IMR-90 (cell line): ENCODE measurements at regions of chr9 and their contacts with region 1.

Region 1: GRCh38 chr9:76704593-76705204 is 59.5 kb upstream of the PCA3 start:
- DNase-seq: peak; percentile 93
- ATAC-seq: peak; percentile 82
- H3K4me3 ChIP-seq: no peak overlapping the region
- H3K27ac ChIP-seq: no peak overlapping the region
- H3K4me1 ChIP-seq: no peaks in the 10 kb centered on the region
- H3K27me3 ChIP-seq: peaks cover 31% of the 10 kb centered on the region
- CTCF ChIP-seq: peak; percentile 88
- POLR2A ChIP-seq: no peak
- RAD21 ChIP-seq: peak; percentile 95

Region 2: GRCh38 chr9:76321205-76321828 is 383.4 kb before region 1 on chr9:
- CTCF ChIA-PET with region 1: no interaction called
- POLR2A ChIA-PET with region 1: no interaction called
- dilution Hi-C with region 1: no loop called
- in situ Hi-C with region 1: no loop called
- intact Hi-C with region 1: loop called (anchors 5 kb)
- DNase-seq: peak; percentile 89
- ATAC-seq: peak; percentile 93
- H3K4me3 ChIP-seq: no peak overlapping the region
- H3K27ac ChIP-seq: peak overlapping the region; percentile 85
- H3K4me1 ChIP-seq: peaks cover 3% of the 10 kb centered on the region
- H3K27me3 ChIP-seq: no peaks in the 10 kb centered on the region
- CTCF ChIP-seq: no peak
- POLR2A ChIP-seq: no peak
- RAD21 ChIP-seq: no peak

Region 3: DNA sequence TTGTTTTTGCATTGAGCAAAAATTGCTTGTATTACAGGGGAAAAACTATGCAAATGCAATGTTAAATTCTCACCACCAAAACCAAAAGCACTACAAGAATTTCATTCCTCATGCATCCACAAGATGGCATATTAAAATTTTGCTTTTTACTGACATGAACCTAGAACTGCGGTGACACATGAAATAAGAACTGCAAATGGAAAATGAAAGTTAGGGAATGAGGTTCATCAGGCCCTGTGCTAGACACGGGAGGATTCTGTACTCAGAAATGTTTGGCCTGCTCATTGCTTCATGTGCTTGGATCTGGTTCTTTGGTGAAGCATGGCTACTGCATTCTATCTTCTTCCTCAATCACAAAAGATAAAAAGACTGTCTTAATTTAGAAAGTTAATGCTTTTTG is 301.3 kb before region 1 on chr9:
- CTCF ChIA-PET with region 1: no interaction called
- POLR2A ChIA-PET with region 1: no interaction called
- dilution Hi-C with region 1: no loop called
- in situ Hi-C with region 1: no loop called
- intact Hi-C with region 1: loop called (anchors 1 kb)
- DNase-seq: peak; percentile 85
- ATAC-seq: peak; percentile 84
- H3K4me3 ChIP-seq: no peak overlapping the region
- H3K27ac ChIP-seq: peak overlapping the region; percentile 26; the same call in 1 of the 2 replicates
- H3K4me1 ChIP-seq: peaks cover 7% of the 10 kb centered on the region
- H3K27me3 ChIP-seq: no peaks in the 10 kb centered on the region
- CTCF ChIP-seq: peak; percentile 69
- POLR2A ChIP-seq: no peak
- RAD21 ChIP-seq: peak; percentile 54

Region 4: GRCh38 chr9:76451234-76451633 is 253.5 kb before region 1 on chr9:
- CTCF ChIA-PET with region 1: interaction called, 7 read pairs
- POLR2A ChIA-PET with region 1: no interaction called
- dilution Hi-C with region 1: no loop called
- in situ Hi-C with region 1: loop called (anchors 5 kb)
- intact Hi-C with region 1: loop called (anchors 1 kb)
- DNase-seq: peak; percentile 85
- ATAC-seq: peak; percentile 53
- H3K4me3 ChIP-seq: no peak overlapping the region
- H3K27ac ChIP-seq: no peak overlapping the region
- H3K4me1 ChIP-seq: peaks cover 11% of the 10 kb centered on the region
- H3K27me3 ChIP-seq: no peaks in the 10 kb centered on the region
- CTCF ChIP-seq: no peak
- POLR2A ChIP-seq: no peak
- RAD21 ChIP-seq: no peak

Region 5: DNA sequence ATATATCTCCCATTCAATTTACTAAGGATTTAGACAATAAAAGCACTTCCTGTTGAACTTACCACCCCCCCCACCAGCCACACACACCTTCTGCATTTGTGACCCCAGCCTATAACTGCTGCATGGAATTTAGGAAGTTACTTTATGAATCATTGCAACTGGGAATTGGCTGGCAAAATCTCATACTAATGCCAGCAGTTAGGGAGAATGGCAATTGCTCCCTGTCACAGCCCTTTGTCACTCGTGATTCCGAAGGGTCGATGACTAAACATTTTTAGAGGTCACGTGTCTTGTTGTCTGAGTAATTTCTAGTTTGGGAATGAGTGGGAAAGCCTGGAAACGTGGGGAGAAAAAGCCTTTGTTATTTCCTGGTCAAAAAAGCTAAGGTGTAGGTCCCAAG is 12.9 kb after region 1 on chr9:
- CTCF ChIA-PET with region 1: no interaction called
- POLR2A ChIA-PET with region 1: no interaction called
- dilution Hi-C with region 1: no loop called
- in situ Hi-C with region 1: no loop called
- intact Hi-C with region 1: no loop called
- DNase-seq: peak; percentile 4
- ATAC-seq: no peak
- H3K4me3 ChIP-seq: no peak overlapping the region
- H3K27ac ChIP-seq: no peak overlapping the region
- H3K4me1 ChIP-seq: no peaks in the 10 kb centered on the region
- H3K27me3 ChIP-seq: no peaks in the 10 kb centered on the region; the same call in 1 of the 2 replicates
- CTCF ChIP-seq: no peak
- POLR2A ChIP-seq: no peak
- RAD21 ChIP-seq: no peak